K562 (cell line): ENCODE measurements at regions of chr6 and their contacts with region 1.

Region 1: DNA sequence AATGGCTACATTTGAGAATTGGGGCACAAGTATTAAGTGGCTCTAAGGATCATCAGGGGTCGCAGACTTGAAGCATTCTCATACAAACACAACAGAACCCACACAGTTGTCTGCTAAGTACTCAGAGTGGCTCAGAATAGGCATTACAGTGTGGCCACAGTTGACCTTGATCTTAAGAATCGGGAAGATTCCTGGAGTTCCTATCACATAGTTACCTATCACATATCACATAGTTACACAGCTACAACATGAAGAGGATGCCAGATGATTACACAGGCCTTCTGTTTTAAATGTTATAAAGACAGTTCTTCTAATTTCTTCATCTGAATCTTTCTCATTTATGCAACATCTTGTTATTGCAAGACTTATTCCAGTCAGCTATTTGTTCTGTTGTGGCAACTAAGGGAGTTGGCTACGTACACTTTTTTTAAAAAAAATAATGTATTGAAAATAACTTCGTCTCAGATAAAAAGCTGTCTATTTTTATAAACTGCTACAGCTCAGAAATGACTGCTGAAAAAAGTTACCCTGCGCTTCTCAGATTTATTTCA is 129.0 kb downstream of the REV3L start:
- DNase-seq: no peak
- ATAC-seq: no peak
- H3K4me3 ChIP-seq: no peak overlapping the region
- H3K27ac ChIP-seq: no peak overlapping the region
- H3K4me1 ChIP-seq: no peaks in the 10 kb centered on the region
- H3K27me3 ChIP-seq: no peaks in the 10 kb centered on the region
- CTCF ChIP-seq: no peak
- EP300 ChIP-seq: no peak
- POLR2A ChIP-seq: no peak
- RAD21 ChIP-seq: no peak

Region 2: DNA sequence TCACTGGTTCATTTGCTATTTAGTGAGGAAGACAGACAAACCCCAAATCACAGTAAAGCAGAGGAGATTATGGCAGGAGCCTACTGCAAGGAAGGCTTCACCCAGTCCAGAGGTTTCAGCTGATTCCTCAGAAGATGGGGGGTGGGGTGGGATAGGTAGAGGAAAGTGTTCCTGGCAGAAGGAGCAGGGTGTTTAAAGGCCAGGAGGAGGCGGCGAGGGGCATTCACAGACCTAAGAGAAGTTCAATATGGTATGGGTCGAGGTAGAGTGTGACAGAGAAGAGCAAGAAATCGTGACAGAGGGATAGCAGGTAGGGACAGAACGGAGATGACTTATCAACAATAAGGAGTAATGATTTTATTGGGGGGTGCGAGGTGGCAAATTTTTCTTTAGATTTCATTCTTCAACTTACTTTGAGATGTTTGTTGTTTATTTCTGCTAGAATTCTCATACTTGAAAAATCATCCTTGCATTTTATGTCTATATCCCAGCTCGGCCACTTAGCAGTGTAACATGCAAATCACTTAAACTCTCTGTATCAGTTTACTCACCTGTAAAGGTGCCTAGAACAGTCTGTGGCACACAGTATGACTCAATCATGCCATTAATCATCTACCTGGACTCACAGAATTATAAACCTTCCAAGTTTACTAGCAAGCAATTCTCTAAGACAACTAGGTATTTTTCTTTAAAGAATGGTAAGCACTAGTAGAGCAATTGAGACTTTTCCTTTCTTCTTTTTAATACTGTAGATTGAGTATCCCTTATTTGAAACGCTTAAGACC is 47.7 kb before region 1 on chr6:
- CTCF ChIA-PET with region 1: no interaction called
- POLR2A ChIA-PET with region 1: interaction called, 10 read pairs
- in situ Hi-C with region 1: no loop called
- intact Hi-C with region 1: no loop called
- DNase-seq: peak in 1 of 4 experiments; percentile 15
- ATAC-seq: no peak; the same call in 2 of the 3 replicates
- H3K4me3 ChIP-seq: no peak overlapping the region
- H3K27ac ChIP-seq: no peak overlapping the region
- H3K4me1 ChIP-seq: no peaks in the 10 kb centered on the region
- H3K27me3 ChIP-seq: no peaks in the 10 kb centered on the region
- CTCF ChIP-seq: no peak
- EP300 ChIP-seq: no peak
- POLR2A ChIP-seq: no peak
- RAD21 ChIP-seq: no peak